ENCODE measurements at regions of chr17 and their contacts with region 1.

Region 1: DNA sequence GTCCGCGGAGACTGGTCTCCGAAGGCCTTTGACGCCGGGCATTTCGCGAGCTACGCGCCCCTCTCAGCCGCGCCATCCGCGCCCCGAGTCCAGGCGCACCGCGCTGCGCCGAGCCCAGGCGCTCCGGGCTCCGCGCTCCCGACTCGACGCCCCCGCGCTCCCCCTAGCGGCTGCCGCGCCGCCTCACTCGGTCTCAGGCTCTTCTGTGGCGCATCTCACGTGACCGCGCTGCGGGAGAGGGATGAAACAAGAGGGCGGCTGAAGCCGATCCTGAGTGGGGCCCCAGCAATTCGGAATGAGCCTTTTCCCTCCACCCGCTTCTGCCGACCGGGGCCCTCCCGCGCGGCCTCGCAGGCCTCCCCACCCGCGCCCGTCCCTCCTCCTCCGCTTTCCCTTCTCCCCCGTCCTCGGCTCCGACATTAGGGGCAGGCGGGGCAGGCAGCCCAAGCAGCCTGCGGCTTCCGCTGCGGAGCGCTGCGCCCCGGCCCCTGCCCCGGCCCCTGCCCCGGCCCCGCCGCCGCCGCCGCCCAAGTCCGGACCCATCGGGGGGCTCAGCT is 42.5 kb upstream of the AMZ2 start:
- DNase-seq: peak; percentile 99
- ATAC-seq: peak; percentile 87
- H3K4me3 Mint-ChIP-seq: peak overlapping the region; percentile 89
- H3K27ac Mint-ChIP-seq: peak overlapping the region; percentile 87
- H3K4me1 Mint-ChIP-seq: peaks cover 18% of the 10 kb centered on the region
- H3K27me3 Mint-ChIP-seq: peaks cover 22% of the 10 kb centered on the region

Region 2: GRCh38 chr17:68122587-68122986 is 82.7 kb before region 1 on chr17:
- POLR2A ChIA-PET with region 1: no interaction called
- DNase-seq: no peak
- ATAC-seq: no peak
- H3K4me3 Mint-ChIP-seq: no peak overlapping the region
- H3K27ac Mint-ChIP-seq: no peak overlapping the region
- H3K4me1 Mint-ChIP-seq: peaks cover 23% of the 10 kb centered on the region
- H3K27me3 Mint-ChIP-seq: no peaks in the 10 kb centered on the region

Region 3: GRCh38 chr17:68184816-68185436 is 20.4 kb before region 1 on chr17:
- POLR2A ChIA-PET with region 1: interaction called, 44 read pairs
- DNase-seq: peak; percentile 43
- ATAC-seq: peak; percentile 78
- H3K4me3 Mint-ChIP-seq: peak overlapping the region; percentile 66
- H3K27ac Mint-ChIP-seq: peak overlapping the region; percentile 78
- H3K4me1 Mint-ChIP-seq: peaks cover 45% of the 10 kb centered on the region
- H3K27me3 Mint-ChIP-seq: peaks cover 6% of the 10 kb centered on the region

Region 4: DNA sequence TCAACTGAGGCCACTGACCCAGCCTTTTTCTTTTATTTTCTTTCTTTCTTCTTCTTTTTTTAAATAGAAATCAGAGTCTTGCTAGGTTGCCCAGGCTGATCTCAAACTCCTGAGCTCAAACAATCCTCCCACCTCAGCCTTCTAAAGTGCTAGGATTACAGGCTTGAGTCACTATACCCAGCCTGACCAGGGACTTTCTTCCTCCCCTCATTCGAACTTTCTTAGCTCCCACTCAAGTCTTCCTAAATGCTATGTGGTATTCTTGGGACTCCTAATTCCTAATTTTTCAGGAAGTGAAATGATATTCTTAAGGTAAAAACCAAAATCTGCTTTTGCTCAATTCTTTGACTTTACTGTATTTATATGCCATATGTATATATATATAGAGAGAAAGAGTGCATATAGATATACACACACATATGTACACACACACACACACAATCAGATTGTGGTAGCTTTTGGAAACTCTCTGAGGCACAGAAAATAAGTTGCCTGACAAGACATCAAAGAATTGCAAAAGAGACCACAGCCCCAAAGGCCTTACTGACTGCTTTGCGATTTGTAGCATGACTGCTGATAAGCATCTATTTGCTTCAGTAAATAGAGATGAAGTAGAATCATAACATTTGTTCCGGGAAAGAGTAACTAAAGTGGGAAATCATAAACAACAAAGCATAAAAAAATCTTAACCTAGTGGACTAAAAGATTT is 33.0 kb after region 1 on chr17:
- POLR2A ChIA-PET with region 1: interaction called, 37 read pairs
- DNase-seq: no peak
- ATAC-seq: peak; percentile 27
- H3K4me3 Mint-ChIP-seq: peak overlapping the region; percentile 80
- H3K27ac Mint-ChIP-seq: peak overlapping the region; percentile 98
- H3K4me1 Mint-ChIP-seq: peaks cover 41% of the 10 kb centered on the region
- H3K27me3 Mint-ChIP-seq: no peaks in the 10 kb centered on the region

Region 5: DNA sequence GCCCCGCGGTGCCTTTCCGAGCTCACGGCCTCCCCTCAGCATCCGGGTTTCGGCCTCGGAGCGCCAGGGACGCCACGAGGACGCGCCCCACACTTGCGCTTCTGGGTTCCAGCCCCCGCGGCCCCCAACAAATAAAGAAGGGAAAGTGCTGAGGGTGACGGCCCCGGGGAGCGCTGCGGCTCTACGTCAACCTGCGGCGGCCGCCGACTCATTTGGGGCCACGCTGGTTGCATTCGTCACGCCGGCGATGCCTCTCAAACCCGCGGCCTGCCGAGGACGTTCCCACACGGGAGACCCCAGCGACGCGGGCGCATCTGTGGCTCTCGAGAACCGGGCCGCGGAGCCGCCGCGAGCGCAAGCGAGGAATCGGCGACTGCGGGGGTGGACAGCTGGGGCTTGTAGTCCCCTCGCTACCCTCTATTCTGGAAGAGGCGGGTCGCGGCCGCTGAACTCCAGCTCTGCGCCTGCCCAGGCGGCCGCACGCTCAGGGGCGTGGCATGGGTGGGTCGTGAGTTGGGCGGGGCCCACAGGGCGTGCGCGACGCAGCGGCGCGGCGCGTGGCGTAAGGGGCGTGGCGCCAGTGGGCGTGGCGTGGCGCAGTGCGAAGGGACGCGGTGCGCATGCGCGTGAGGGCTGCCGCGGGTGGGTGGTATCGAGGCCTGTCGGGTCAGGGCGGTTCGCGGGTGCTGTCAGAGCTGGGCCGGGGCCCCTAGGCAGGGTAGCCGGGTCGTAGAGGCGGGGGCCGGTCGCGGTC is 42.3 kb after region 1 on chr17 and contains the start of gene AMZ2:
- POLR2A ChIA-PET with region 1: interaction called, 47 read pairs
- DNase-seq: peak; percentile 100
- ATAC-seq: peak; percentile 87
- H3K4me3 Mint-ChIP-seq: peak within 1 kb of the TSS; percentile 89
- H3K27ac Mint-ChIP-seq: peak within 1 kb of the TSS; percentile 98
- H3K4me1 Mint-ChIP-seq: peaks cover 30% of the 10 kb centered on the region
- H3K27me3 Mint-ChIP-seq: no peaks in the 10 kb centered on the region
- total RNA-seq, gene AMZ2: 84.2 to 84.5 TPM

Region 6: GRCh38 chr17:68398691-68399637 is 193.6 kb after region 1 on chr17:
- POLR2A ChIA-PET with region 1: interaction called, 12 read pairs
- DNase-seq: peak; percentile 52
- ATAC-seq: peak; percentile 79
- H3K4me3 Mint-ChIP-seq: peak overlapping the region; percentile 65
- H3K27ac Mint-ChIP-seq: peak overlapping the region; percentile 94
- H3K4me1 Mint-ChIP-seq: peaks cover 26% of the 10 kb centered on the region
- H3K27me3 Mint-ChIP-seq: no peaks in the 10 kb centered on the region

Measured in activated naive CD8-positive, alpha-beta T cell treated with anti-CD3 and anti-CD28 coated beads, Interleukin-2, amount 10 ng/mL, durations not matched to agents 7 days and 5 days (primary cell).